GM12878 (cell line): ENCODE measurements at regions of chr3 and their contacts with region 1.

Region 1: DNA sequence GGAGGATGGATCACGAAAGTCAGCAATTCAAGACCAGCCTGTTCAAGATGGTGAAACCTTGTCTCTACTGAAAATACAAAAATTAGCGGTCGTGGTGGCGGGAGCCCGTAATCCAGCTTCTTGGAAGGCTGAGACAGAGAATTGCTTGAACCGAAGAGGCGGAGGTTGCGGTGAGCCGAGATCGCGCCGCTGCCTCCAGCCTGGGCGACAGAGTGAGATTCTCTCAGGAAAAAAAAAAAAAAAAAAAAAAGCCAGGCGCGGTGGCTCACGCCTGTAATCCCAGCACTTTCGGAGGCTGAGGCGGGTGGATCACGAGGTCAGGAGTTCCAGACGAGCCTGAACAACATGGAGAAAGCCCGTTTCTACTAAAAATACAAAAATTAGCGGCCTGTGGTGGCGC is 5.0 kb downstream of the EAF2 start:
- DNase-seq: no peak
- ATAC-seq: no peak
- H3K4me3 ChIP-seq: no peak overlapping the region
- H3K27ac ChIP-seq: no peak overlapping the region
- H3K4me1 ChIP-seq: no peaks in the 10 kb centered on the region
- H3K27me3 ChIP-seq: no peaks in the 10 kb centered on the region
- CTCF ChIP-seq: no peak
- EP300 ChIP-seq: no peak
- POLR2A ChIP-seq: no peak
- RAD21 ChIP-seq: no peak

Region 2: GRCh38 chr3:121202573-121202972 is 637.4 kb before region 1 on chr3:
- CTCF ChIA-PET with region 1: no interaction called
- POLR2A ChIA-PET with region 1: no interaction called
- RAD21 ChIA-PET with region 1: no interaction called
- SMC1A ChIA-PET with region 1: no interaction called
- in situ Hi-C with region 1: no loop called
- intact Hi-C with region 1: no loop called
- DNase-seq: no peak
- ATAC-seq: no peak
- H3K4me3 ChIP-seq: no peak overlapping the region
- H3K27ac ChIP-seq: no peak overlapping the region
- H3K4me1 ChIP-seq: no peaks in the 10 kb centered on the region
- H3K27me3 ChIP-seq: no peaks in the 10 kb centered on the region
- CTCF ChIP-seq: no peak
- EP300 ChIP-seq: no peak
- POLR2A ChIP-seq: no peak
- RAD21 ChIP-seq: no peak

Region 3: DNA sequence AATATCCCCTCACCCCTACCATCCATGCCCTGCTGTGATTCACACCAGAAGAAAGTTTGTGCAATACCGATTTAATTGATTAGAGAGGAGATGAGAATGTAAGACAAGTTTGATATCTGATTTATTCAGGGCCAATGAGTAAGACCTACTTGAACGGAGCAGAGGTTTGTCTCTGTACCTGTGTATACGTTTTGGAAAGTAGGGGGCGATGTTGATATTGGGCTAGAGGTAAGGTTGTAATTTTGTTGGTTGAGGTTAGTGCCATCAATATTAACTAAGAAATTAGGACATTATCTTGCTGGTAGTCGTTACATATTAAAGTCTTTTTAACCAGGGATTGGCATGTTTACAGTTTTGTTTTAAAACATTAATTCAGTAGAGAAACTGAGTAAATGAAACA is 15.6 kb after region 1 on chr3:
- CTCF ChIA-PET with region 1: interaction called, 3 read pairs
- POLR2A ChIA-PET with region 1: interaction called, 6 read pairs
- RAD21 ChIA-PET with region 1: no interaction called
- SMC1A ChIA-PET with region 1: interaction called, 15 read pairs
- in situ Hi-C with region 1: no loop called
- intact Hi-C with region 1: no loop called
- DNase-seq: no peak
- ATAC-seq: peak; percentile 52; the same call in 1 of the 3 replicates
- H3K4me3 ChIP-seq: no peak overlapping the region
- H3K27ac ChIP-seq: no peak overlapping the region
- H3K4me1 ChIP-seq: no peaks in the 10 kb centered on the region
- H3K27me3 ChIP-seq: no peaks in the 10 kb centered on the region
- CTCF ChIP-seq: peak in 2 of 3 experiments; percentile 26 to 29; a peak in 3 of 6 replicates
- EP300 ChIP-seq: no peak
- POLR2A ChIP-seq: no peak
- RAD21 ChIP-seq: peak; percentile 45; the same call in 1 of the 2 replicates